ENCODE measurements at regions of chr14 and their contacts with region 1.

Region 1: DNA sequence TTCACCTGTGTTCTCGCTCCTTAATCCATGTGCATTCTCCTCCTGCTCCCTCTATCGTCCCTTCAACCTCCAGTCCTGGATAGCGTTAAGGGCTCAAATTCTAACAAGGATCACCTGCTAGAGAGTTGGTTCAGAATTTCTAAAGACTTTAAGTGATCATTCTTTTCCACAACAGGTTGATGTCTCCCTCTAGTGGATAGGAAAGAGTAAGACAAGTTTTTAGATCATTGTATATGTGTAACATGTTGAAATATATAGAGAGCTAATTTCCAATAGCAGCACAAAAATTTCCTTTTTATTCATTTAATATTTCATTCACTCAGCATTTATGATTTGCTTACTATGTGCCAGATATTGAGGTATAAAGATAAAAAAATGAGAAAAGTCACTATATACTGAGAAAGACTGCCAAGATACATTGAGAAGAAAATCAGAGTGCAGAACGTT is 9.3 kb upstream of the ESR2 start:
- DNase-seq: no peak
- H3K4me3 ChIP-seq: no peak overlapping the region
- H3K27ac ChIP-seq: no peak overlapping the region
- H3K4me1 ChIP-seq: no peaks in the 10 kb centered on the region
- H3K27me3 ChIP-seq: no peaks in the 10 kb centered on the region
- CTCF ChIP-seq: peak; percentile 45 to 90 (median 73)
- POLR2A ChIP-seq: no peak

Region 2: GRCh38 chr14:63795532-63795931 is 508.0 kb before region 1 on chr14:
- intact Hi-C with region 1: loop called (anchors 10 kb)
- DNase-seq: no peak
- H3K4me3 ChIP-seq: no peak overlapping the region
- H3K27ac ChIP-seq: no peak overlapping the region
- H3K4me1 ChIP-seq: peaks cover 0 to 6% of the 10 kb centered on the region in 2 donors
- H3K27me3 ChIP-seq: no peaks in the 10 kb centered on the region
- CTCF ChIP-seq: no peak
- POLR2A ChIP-seq: no peak

Measured in thyroid gland (tissue), 4 donors.